MCF 10A (cell line): ENCODE measurements at regions of chr12 and their contacts with region 1.

Region 1: GRCh38 chr12:123580772-123581171 is 3.6 kb upstream of the TMED2 start:
- DNase-seq: no peak
- H3K4me3 Mint-ChIP-seq: no peak overlapping the region
- H3K27ac Mint-ChIP-seq: no peak overlapping the region
- H3K4me1 Mint-ChIP-seq: peaks cover 15% of the 10 kb centered on the region
- H3K27me3 Mint-ChIP-seq: no peaks in the 10 kb centered on the region
- CTCF ChIP-seq: no peak

Region 2: GRCh38 chr12:123271001-123271729 is 309.6 kb before region 1 on chr12:
- CTCF ChIA-PET with region 1: interaction called, 6 read pairs
- POLR2A ChIA-PET with region 1: interaction called, 6 read pairs
- intact Hi-C with region 1: loop called (anchors 2 kb)
- DNase-seq: peak; percentile 64
- H3K4me3 Mint-ChIP-seq: peak overlapping the region; percentile 80
- H3K27ac Mint-ChIP-seq: no peak overlapping the region
- H3K4me1 Mint-ChIP-seq: peaks cover 11% of the 10 kb centered on the region
- H3K27me3 Mint-ChIP-seq: no peaks in the 10 kb centered on the region
- CTCF ChIP-seq: peak; percentile 64

Region 3: GRCh38 chr12:123388177-123388947 is 192.4 kb before region 1 on chr12:
- CTCF ChIA-PET with region 1: interaction called, 3 read pairs
- POLR2A ChIA-PET with region 1: interaction called, 3 read pairs
- intact Hi-C with region 1: loop called (anchors 5 kb)
- DNase-seq: peak; percentile 71
- H3K4me3 Mint-ChIP-seq: peak overlapping the region; percentile 68
- H3K27ac Mint-ChIP-seq: no peak overlapping the region
- H3K4me1 Mint-ChIP-seq: peaks cover 21% of the 10 kb centered on the region
- H3K27me3 Mint-ChIP-seq: no peaks in the 10 kb centered on the region
- CTCF ChIP-seq: no peak

Region 4: GRCh38 chr12:123457980-123458783 is 122.6 kb before region 1 on chr12 and contains the start of gene SNRNP35:
- CTCF ChIA-PET with region 1: interaction called, 5 read pairs
- POLR2A ChIA-PET with region 1: interaction called, 3 read pairs
- intact Hi-C with region 1: loop called (anchors 5 kb)
- DNase-seq: peak; percentile 81
- H3K4me3 Mint-ChIP-seq: peak within 1 kb of the TSS; percentile 97
- H3K27ac Mint-ChIP-seq: peak within 1 kb of the TSS; percentile 99
- H3K4me1 Mint-ChIP-seq: peaks cover 14% of the 10 kb centered on the region
- H3K27me3 Mint-ChIP-seq: no peaks in the 10 kb centered on the region
- CTCF ChIP-seq: no peak
- total RNA-seq, gene SNRNP35: 18.0 and 24.7 TPM in 2 replicates

Region 5: GRCh38 chr12:123519141-123520001 is 61.4 kb before region 1 on chr12:
- CTCF ChIA-PET with region 1: interaction called, 10 read pairs
- POLR2A ChIA-PET with region 1: interaction called, 3 read pairs
- intact Hi-C with region 1: no loop called
- DNase-seq: peak; percentile 94
- H3K4me3 Mint-ChIP-seq: peak overlapping the region; percentile 64
- H3K27ac Mint-ChIP-seq: peak overlapping the region; percentile 99
- H3K4me1 Mint-ChIP-seq: peaks cover 19% of the 10 kb centered on the region
- H3K27me3 Mint-ChIP-seq: no peaks in the 10 kb centered on the region
- CTCF ChIP-seq: no peak

Region 6: DNA sequence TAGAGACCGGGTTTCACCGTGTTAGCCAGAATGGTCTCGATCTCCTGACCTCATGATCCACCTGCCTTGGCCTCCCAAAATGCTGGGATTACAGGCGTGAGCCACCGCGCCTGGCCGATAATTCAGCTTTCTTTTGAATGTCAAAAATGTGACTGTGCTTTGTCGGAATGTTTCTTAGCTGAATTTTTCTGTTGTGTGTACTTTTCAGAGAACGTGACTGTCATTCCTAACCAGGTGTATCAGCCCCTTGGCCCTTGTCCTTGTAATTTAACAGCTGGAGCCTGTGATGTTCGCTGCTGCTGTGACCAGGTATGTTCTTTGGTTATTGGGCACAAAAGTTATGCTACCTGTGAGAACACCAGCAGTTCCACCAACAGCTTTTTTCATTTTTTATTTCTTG is 98.2 kb after region 1 on chr12:
- CTCF ChIA-PET with region 1: no interaction called
- POLR2A ChIA-PET with region 1: no interaction called
- intact Hi-C with region 1: no loop called
- DNase-seq: no peak
- H3K4me3 Mint-ChIP-seq: no peak overlapping the region
- H3K27ac Mint-ChIP-seq: no peak overlapping the region
- H3K4me1 Mint-ChIP-seq: no peaks in the 10 kb centered on the region
- H3K27me3 Mint-ChIP-seq: no peaks in the 10 kb centered on the region
- CTCF ChIP-seq: no peak